Mammary epithelial cell (primary cell): ENCODE measurements at regions of chr12 and their contacts with region 1.

Region 1: DNA sequence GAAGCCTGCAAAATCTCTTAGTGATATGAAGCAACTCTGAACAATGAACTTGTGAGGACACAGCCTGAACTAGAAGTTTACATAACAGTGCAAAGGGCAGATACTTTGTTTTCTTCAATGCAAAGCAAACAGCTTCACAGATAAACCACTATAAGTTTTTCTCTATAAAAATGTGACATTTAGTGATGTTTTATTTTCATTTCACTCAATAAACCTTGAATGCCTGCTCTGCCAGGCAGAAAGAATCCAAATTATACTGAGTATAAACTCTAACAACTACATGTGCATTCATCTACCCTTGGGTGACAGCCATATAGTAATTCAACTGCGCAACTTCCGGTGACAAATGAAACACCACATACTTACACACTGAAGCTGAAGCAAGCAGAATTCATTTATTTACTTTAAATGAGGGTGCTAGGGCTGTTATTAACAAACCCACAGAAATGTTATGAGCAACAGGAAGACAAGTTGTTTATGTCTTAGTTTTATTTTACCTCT is 10.3 kb downstream of the DCP1B start:
- DNase-seq: no peak
- H3K4me3 ChIP-seq: no peak overlapping the region
- H3K27ac ChIP-seq: peak overlapping the region; percentile 29
- H3K4me1 ChIP-seq: peaks cover 14% of the 10 kb centered on the region
- H3K27me3 ChIP-seq: no peaks in the 10 kb centered on the region
- CTCF ChIP-seq: no peak

Region 2: DNA sequence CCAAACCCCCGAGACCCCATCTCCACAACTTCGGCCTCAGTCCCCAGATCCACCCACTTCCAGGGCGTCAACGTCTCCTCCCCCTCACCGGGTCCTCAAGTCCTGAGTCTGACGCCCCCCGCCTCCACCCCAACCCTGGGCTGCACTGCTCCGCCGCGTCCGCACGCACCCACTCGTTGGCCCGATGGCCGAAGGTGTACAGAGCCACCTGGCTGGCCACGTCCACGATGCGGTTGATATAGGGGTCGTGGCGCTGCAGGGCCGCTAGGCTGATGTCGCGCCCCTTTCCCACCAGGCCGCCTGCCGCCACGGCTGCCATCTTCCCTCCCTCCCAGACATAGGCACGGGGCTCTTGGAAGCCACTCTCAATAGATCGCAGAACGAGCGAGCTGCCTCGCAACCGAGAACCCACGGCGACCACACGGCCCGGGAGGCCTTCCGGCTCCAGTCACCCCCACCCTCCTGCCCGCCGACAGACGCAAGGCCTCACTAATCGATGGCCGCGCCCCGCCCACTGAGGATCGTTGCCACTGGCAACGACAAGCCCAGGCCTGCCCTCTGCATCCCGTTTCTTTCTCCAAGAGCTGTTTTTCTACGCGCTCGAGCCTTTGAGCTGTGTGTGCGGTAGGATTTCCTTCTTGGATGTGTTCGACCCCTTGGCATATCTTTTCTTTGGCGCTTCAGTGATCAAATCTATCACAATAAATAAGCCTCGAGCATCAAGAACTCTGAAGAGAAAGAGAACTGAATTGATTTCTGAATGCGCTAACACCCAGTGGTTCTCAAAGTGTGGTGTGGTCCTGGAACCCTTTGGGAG is 10.4 kb after region 1 on chr12 and contains the start of gene DCP1B:
- CTCF ChIA-PET with region 1: no interaction called
- dilution Hi-C with region 1: no loop called
- in situ Hi-C with region 1: no loop called
- intact Hi-C with region 1: loop called (anchors 1 kb)
- DNase-seq: peak; percentile 92
- H3K4me3 ChIP-seq: peak within 1 kb of the TSS; percentile 55 to 88 (median 71)
- H3K27ac ChIP-seq: peak within 1 kb of the TSS; percentile 65
- H3K4me1 ChIP-seq: peaks cover 4% of the 10 kb centered on the region
- H3K27me3 ChIP-seq: no peaks in the 10 kb centered on the region
- CTCF ChIP-seq: no peak
- total RNA-seq, gene DCP1B: 8.2 to 11.5 TPM

Region 3: DNA sequence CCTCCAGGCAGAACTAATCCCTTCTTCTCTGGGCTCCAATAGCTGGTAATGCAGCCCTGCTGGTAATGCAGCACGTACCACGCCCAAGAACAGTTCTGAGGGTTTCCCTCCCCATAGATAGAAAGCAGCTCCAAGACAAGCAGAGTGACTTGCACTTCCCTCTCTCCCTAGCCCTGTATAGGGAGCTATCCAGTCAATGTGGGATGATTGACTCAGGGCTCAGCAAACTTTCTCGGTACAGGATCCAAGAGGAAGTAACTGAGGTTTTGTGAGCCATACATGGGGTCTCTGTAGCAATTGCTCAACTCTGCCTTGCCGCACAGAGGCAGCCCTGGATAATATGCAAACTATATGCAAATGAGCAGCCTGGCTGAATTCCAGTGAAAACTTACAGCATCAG is 785.4 kb after region 1 on chr12:
- CTCF ChIA-PET with region 1: no interaction called
- dilution Hi-C with region 1: no loop called
- in situ Hi-C with region 1: no loop called
- intact Hi-C with region 1: no loop called
- DNase-seq: no peak
- H3K4me3 ChIP-seq: no peak overlapping the region
- H3K27ac ChIP-seq: no peak overlapping the region
- H3K4me1 ChIP-seq: no peaks in the 10 kb centered on the region
- H3K27me3 ChIP-seq: no peaks in the 10 kb centered on the region
- CTCF ChIP-seq: no peak